ENCODE measurements at regions of chr9 and their contacts with region 1.

Region 1: DNA sequence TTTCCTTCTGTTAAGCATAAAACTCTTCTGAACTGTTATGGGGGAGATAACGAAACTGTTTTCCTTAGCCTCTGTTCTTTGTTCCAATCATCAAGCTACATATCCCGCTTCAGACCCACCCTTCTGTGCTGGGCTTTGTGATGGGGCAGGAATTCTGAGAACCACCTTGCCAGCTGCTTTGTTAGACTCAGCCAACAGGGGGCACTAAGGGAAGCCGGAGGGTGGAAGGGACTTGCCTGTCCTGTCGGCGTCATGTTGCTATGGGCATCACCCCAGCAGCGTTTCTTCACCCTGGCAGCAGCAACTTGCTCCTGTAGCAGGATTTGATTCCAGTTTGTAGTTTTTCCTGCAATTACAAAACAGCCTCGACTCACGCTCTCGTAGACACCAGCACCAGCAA is 169.1 kb downstream of the CAAP1 start:
- DNase-seq: peak; percentile 56 to 89
- H3K4me3 ChIP-seq: no peak overlapping the region
- H3K27ac ChIP-seq: no peak overlapping the region
- H3K4me1 ChIP-seq: no peaks in the 10 kb centered on the region; a peak in 2 of 7 replicates
- H3K27me3 ChIP-seq: no peaks in the 10 kb centered on the region
- CTCF ChIP-seq: peak; percentile 79 to 95 (median 84)
- EP300 ChIP-seq: no peak
- POLR2A ChIP-seq: no peak
- RAD21 ChIP-seq: peak; percentile 73 to 79

Region 2: GRCh38 chr9:26694381-26695297 is 28.8 kb before region 1 on chr9:
- CTCF ChIA-PET with region 1: interaction called, 11 read pairs
- POLR2A ChIA-PET with region 1: no interaction called
- DNase-seq: no peak
- H3K4me3 ChIP-seq: no peak overlapping the region
- H3K27ac ChIP-seq: no peak overlapping the region
- H3K4me1 ChIP-seq: no peaks in the 10 kb centered on the region
- H3K27me3 ChIP-seq: no peaks in the 10 kb centered on the region
- CTCF ChIP-seq: no peak
- EP300 ChIP-seq: no peak
- POLR2A ChIP-seq: no peak
- RAD21 ChIP-seq: no peak

Region 3: DNA sequence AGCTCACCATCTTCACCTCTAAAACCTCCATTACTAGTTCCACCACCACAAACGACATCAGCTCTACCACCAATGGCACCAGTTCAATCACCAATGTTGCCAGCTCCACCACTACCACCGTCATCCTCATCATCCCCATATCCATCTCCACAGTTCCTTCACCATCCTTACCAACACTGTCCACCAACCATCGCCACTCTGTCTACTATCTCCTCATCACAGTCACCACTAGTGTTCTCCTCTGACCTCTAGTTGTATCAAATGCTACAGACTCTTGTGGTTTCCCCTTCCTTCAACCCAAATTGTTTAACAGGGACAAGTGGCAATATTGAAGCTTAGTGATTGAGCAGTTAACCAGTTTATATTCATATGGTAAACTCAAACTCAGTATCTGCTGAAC is 13.5 kb before region 1 on chr9:
- CTCF ChIA-PET with region 1: interaction called, 26 read pairs
- POLR2A ChIA-PET with region 1: no interaction called
- DNase-seq: no peak
- H3K4me3 ChIP-seq: no peak overlapping the region
- H3K27ac ChIP-seq: no peak overlapping the region
- H3K4me1 ChIP-seq: no peaks in the 10 kb centered on the region
- H3K27me3 ChIP-seq: no peaks in the 10 kb centered on the region
- CTCF ChIP-seq: no peak
- EP300 ChIP-seq: no peak
- POLR2A ChIP-seq: no peak
- RAD21 ChIP-seq: no peak

Region 4: DNA sequence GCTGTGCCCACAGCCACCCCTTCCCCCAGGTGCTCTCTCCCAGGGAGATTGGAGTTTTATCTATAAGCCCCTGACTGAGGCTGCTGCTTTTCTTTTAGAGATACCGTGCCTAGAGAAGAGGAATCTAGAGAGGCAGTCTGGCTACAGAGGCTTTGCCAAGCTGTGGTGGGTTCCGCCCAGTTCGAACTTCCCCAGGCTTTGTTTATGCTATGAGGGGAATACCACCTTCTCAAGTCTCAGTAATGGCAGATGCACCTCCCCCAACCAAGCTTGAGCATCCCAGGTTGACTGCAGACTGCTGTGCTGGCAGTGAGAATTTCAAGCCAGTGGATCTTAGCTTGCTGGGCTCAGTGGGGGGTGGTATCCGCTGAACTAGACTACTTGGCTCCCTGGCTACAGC is 11.7 kb after region 1 on chr9:
- CTCF ChIA-PET with region 1: interaction called, 15 read pairs
- POLR2A ChIA-PET with region 1: no interaction called
- DNase-seq: no peak
- H3K4me3 ChIP-seq: no peak overlapping the region
- H3K27ac ChIP-seq: no peak overlapping the region
- H3K4me1 ChIP-seq: no peaks in the 10 kb centered on the region
- H3K27me3 ChIP-seq: no peaks in the 10 kb centered on the region
- CTCF ChIP-seq: no peak
- EP300 ChIP-seq: no peak
- POLR2A ChIP-seq: no peak
- RAD21 ChIP-seq: no peak

Region 5: DNA sequence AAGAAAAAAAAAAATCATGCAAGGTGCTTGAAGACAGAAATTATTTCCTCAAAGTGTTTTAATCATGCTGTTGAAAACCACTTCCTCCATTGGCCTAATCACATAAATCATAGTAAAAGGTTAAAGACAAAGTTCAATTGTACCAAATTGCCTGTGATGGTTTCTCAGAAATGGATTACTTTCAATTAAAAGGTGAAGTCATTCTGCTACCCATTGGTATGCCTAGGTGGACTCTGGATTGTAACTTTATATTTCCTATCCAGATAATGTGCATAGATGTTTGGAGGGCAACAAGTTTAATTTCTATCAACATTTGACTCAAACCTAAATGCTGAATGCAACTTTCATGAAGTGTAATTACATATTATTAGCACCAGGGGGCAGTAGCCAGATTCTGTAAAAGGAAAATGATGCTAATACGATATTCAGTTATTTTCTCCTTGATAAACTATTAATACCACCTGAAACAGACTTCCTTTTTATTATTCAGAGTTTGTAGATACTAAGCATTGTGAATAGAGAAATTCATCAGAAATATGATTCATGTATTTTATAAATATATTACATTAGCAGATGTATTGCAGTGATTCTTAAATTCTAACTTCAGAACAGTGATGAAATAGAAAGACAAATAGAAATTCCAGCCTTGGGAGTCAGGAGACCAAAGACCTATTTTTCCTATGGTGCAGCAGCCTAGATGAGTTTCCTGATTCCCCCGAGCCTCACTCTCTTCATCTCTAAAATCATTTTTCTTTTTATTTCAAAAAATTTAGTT is 20.9 kb after region 1 on chr9:
- CTCF ChIA-PET with region 1: interaction called, 14 read pairs
- POLR2A ChIA-PET with region 1: interaction called, 6 read pairs
- DNase-seq: no peak
- H3K4me3 ChIP-seq: no peak overlapping the region
- H3K27ac ChIP-seq: no peak overlapping the region
- H3K4me1 ChIP-seq: peaks cover 0 to 11% (median 5%) of the 10 kb centered on the region in 4 experiments; a peak in 5 of 7 replicates
- H3K27me3 ChIP-seq: no peaks in the 10 kb centered on the region
- CTCF ChIP-seq: peak in 2 of 3 experiments; percentile 19 to 61; a peak in 2 of 4 replicates
- EP300 ChIP-seq: no peak
- POLR2A ChIP-seq: no peak
- RAD21 ChIP-seq: peak in 1 of 2 experiments; percentile 54; a peak in 3 of 4 replicates

Region 6: DNA sequence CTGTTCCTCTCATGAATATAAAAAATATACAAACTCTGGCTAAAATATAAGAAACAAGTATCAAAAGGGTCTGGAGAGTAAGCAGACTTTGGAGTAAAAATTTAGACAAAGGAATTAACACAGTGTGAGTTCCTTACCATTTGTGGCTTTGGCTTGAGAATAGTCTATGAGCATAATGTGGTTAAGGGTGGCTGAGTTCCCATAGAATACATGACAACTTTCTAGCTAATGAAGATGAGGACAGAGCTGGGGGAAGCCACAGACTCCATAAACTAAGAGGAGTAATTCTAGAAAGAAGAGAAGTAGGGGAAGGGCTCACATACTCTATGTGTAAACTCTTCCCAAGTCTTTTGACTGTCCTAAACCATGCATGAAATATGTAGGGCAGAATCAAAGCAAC is 89.8 kb after region 1 on chr9:
- CTCF ChIA-PET with region 1: no interaction called
- POLR2A ChIA-PET with region 1: no interaction called
- DNase-seq: no peak
- H3K4me3 ChIP-seq: no peak overlapping the region
- H3K27ac ChIP-seq: no peak overlapping the region
- H3K4me1 ChIP-seq: no peaks in the 10 kb centered on the region
- H3K27me3 ChIP-seq: no peaks in the 10 kb centered on the region
- CTCF ChIP-seq: no peak
- EP300 ChIP-seq: no peak
- POLR2A ChIP-seq: no peak
- RAD21 ChIP-seq: no peak

Measured in H1 (cell line).